Panc1 (cell line): ENCODE measurements at regions of chr11 and their contacts with region 1.

Region 1: GRCh38 chr11:86919557-86920210 is 35.5 kb downstream of the FZD4 start:
- DNase-seq: no peak
- ATAC-seq: peak; percentile 72
- H3K4me3 ChIP-seq: no peak overlapping the region
- H3K27ac ChIP-seq: no peak overlapping the region
- H3K4me1 ChIP-seq: peaks cover 10% of the 10 kb centered on the region
- H3K27me3 ChIP-seq: no peaks in the 10 kb centered on the region
- CTCF ChIP-seq: peak; percentile 84

Region 2: DNA sequence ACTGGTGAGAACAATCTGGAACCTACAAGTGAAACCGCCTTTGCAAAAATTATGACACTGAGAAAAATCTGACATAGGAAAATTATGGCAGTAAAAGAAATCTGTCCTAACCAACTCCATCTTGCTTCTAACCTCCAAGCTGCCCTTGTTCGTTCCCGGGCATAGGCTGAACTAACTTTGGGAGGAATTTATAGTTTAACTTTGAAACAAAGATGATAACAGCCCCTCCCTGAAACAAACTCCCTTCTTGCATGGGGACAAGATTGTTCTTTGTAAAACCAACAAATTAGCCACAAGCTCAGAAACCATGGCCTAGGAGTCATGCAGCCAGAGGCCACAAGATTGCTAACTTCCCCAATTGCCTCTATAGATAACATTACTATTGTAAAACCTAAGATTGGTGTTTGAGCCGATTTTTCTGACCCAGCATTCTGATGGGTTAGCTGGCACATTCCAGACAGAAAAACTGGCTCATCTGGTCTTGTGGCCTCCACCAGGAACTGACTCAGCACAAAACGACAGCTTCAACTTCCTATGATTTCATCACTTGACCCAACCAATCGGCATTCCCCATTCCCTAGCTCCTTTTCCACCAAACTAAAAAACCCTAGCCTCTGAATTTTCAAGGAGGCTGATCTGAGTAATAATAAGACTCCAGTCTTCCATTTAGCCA is 548.6 kb before region 1 on chr11:
- CTCF ChIA-PET with region 1: no interaction called
- POLR2A ChIA-PET with region 1: no interaction called
- in situ Hi-C with region 1: no loop called
- intact Hi-C with region 1: loop called (anchors 10 kb)
- DNase-seq: no peak
- ATAC-seq: no peak
- H3K4me3 ChIP-seq: no peak overlapping the region
- H3K27ac ChIP-seq: no peak overlapping the region
- H3K4me1 ChIP-seq: no peaks in the 10 kb centered on the region
- H3K27me3 ChIP-seq: no peaks in the 10 kb centered on the region
- CTCF ChIP-seq: no peak

Region 3: DNA sequence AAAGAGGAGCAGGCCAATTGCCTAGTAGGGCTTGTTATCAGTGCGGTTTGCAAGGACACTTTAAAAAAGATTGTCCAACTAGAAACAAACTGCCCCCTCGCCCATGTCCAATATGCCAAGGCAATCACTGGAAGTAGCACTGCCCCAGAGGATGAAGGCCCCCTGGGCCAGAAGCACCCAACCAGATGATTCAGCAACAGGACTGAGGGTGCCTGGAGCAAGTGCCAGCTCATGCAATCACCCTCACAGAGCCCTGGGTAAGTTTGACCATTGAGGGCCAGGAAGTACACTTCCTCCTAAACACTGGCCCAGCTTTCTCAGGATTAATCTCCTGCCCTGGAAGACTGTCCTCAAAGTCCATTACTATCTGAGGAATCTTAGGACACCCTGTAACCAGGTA is 70.8 kb before region 1 on chr11:
- CTCF ChIA-PET with region 1: no interaction called
- POLR2A ChIA-PET with region 1: no interaction called
- in situ Hi-C with region 1: no loop called
- intact Hi-C with region 1: no loop called
- DNase-seq: no peak
- ATAC-seq: no peak
- H3K4me3 ChIP-seq: no peak overlapping the region
- H3K27ac ChIP-seq: no peak overlapping the region
- H3K4me1 ChIP-seq: no peaks in the 10 kb centered on the region
- H3K27me3 ChIP-seq: no peaks in the 10 kb centered on the region
- CTCF ChIP-seq: no peak

Region 4: GRCh38 chr11:86869966-86870570 is 49.6 kb before region 1 on chr11:
- CTCF ChIA-PET with region 1: interaction called, 6 read pairs
- POLR2A ChIA-PET with region 1: no interaction called
- in situ Hi-C with region 1: no loop called
- intact Hi-C with region 1: loop called (anchors 1 kb)
- DNase-seq: peak; percentile 33
- ATAC-seq: peak; percentile 82
- H3K4me3 ChIP-seq: no peak overlapping the region
- H3K27ac ChIP-seq: no peak overlapping the region
- H3K4me1 ChIP-seq: no peaks in the 10 kb centered on the region
- H3K27me3 ChIP-seq: no peaks in the 10 kb centered on the region
- CTCF ChIP-seq: peak; percentile 96

Region 5: DNA sequence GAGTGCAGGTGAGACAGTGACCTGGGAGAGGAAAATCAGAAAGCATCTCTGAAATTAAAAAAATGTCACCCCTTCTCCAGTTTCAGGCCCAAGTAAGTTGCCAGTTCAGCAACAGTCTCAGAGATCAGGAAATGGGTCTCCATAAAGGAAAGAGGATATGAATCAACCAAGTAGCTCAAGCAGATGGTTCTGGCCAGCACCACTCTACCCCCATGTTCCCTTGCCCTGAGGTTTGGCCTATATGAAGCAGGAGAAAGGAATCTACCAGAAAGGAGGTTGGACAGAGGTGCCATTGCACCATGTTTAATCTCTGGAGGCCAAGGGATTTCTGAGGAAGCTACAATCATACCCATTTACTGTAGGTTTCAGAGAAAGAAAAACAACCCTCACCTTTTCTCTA is 27.9 kb after region 1 on chr11:
- CTCF ChIA-PET with region 1: no interaction called
- POLR2A ChIA-PET with region 1: no interaction called
- in situ Hi-C with region 1: no loop called
- intact Hi-C with region 1: no loop called
- DNase-seq: no peak
- ATAC-seq: no peak
- H3K4me3 ChIP-seq: no peak overlapping the region
- H3K27ac ChIP-seq: no peak overlapping the region
- H3K4me1 ChIP-seq: no peaks in the 10 kb centered on the region
- H3K27me3 ChIP-seq: no peaks in the 10 kb centered on the region
- CTCF ChIP-seq: no peak

Region 6: DNA sequence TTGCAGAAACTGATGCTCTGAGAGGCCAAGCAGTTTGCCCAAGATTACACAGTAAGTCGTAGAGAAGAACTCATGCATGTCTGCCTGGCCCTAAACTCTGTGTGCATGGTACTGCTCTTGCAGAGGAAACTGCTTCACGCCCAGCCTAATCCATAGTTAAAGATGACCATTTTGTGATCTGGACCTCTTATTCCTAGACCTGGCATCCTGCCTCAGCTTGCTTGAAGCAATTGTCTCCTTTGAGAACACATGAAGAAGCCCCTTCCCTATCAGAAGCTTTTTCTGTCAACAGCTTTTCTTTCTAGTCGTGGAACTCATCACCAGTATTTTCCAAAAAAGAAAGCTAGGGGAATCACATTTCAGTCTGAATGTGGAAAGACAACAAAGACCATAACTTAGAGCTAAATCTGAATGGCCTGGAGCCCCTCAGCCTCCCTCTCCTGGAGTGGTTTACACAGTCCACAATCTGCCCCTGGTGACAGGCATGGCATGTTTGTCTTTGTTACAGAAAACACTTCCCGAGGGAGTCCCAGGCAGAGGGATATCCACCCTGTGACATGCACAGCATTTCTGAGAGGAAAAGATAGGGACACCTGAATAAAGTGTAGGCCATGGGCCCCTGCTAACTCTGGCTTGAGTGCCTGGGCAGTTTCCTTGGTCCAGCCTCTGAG is 38.4 kb after region 1 on chr11:
- CTCF ChIA-PET with region 1: no interaction called
- POLR2A ChIA-PET with region 1: no interaction called
- in situ Hi-C with region 1: no loop called
- intact Hi-C with region 1: no loop called
- DNase-seq: no peak
- ATAC-seq: no peak
- H3K4me3 ChIP-seq: no peak overlapping the region
- H3K27ac ChIP-seq: no peak overlapping the region
- H3K4me1 ChIP-seq: peaks cover 12% of the 10 kb centered on the region; the same call in 1 of the 2 replicates
- H3K27me3 ChIP-seq: peaks cover 5% of the 10 kb centered on the region; the same call in 1 of the 2 replicates
- CTCF ChIP-seq: no peak

Region 7: GRCh38 chr11:86983021-86983488 is 63.4 kb after region 1 on chr11:
- CTCF ChIA-PET with region 1: no interaction called
- POLR2A ChIA-PET with region 1: no interaction called
- in situ Hi-C with region 1: no loop called
- intact Hi-C with region 1: loop called (anchors 10 kb)
- DNase-seq: no peak
- ATAC-seq: no peak
- H3K4me3 ChIP-seq: no peak overlapping the region
- H3K27ac ChIP-seq: no peak overlapping the region
- H3K4me1 ChIP-seq: no peaks in the 10 kb centered on the region
- H3K27me3 ChIP-seq: no peaks in the 10 kb centered on the region
- CTCF ChIP-seq: no peak